ENCODE measurements at regions of chr7 and their contacts with region 1.

Region 1: GRCh38 chr7:100101016-100101862 is at the starts of genes AP4M1 and MCM7:
- DNase-seq: peak; percentile 99
- ATAC-seq: peak; percentile 87
- H3K4me3 Mint-ChIP-seq: peak within 1 kb of the TSS; percentile 91
- H3K27ac Mint-ChIP-seq: peak within 1 kb of the TSS; percentile 99
- H3K4me1 Mint-ChIP-seq: peaks cover 24% of the 10 kb centered on the region
- H3K27me3 Mint-ChIP-seq: no peaks in the 10 kb centered on the region
- CTCF ChIP-seq: no peak
- total RNA-seq, gene AP4M1: 16.9 to 18.0 TPM (median 17.4 TPM) in 3 replicates
- total RNA-seq, gene MCM7: 306 to 351 TPM (median 315 TPM) in 3 replicates

Region 2: GRCh38 chr7:100081535-100082102 is 19.6 kb before region 1 on chr7 and contains the start of gene ZNF3:
- CTCF ChIA-PET with region 1: interaction called, 23 read pairs
- POLR2A ChIA-PET with region 1: interaction called, 56 read pairs
- DNase-seq: peak; percentile 98
- ATAC-seq: peak; percentile 86
- H3K4me3 Mint-ChIP-seq: peak within 1 kb of the TSS; percentile 98
- H3K27ac Mint-ChIP-seq: peak within 1 kb of the TSS; percentile 95
- H3K4me1 Mint-ChIP-seq: peaks cover 23% of the 10 kb centered on the region
- H3K27me3 Mint-ChIP-seq: no peaks in the 10 kb centered on the region; the same call in 1 of the 2 replicates
- CTCF ChIP-seq: peak; percentile 86
- total RNA-seq, gene ZNF3: 38.1 to 48.3 TPM (median 39.1 TPM) in 3 replicates

Region 3: GRCh38 chr7:100088621-100089457 is 12.4 kb before region 1 on chr7 and contains the start of gene COPS6:
- CTCF ChIA-PET with region 1: interaction called, 7 read pairs
- POLR2A ChIA-PET with region 1: interaction called, 56 read pairs
- DNase-seq: peak; percentile 79
- ATAC-seq: peak; percentile 4
- H3K4me3 Mint-ChIP-seq: peak within 1 kb of the TSS; percentile 93
- H3K27ac Mint-ChIP-seq: peak within 1 kb of the TSS; percentile 92
- H3K4me1 Mint-ChIP-seq: peaks cover 11% of the 10 kb centered on the region
- H3K27me3 Mint-ChIP-seq: no peaks in the 10 kb centered on the region; the same call in 1 of the 2 replicates
- CTCF ChIP-seq: no peak
- total RNA-seq, gene COPS6: 118 to 124 TPM (median 119 TPM) in 3 replicates

Region 4: GRCh38 chr7:100111914-100112313 is 10.7 kb after region 1 on chr7:
- CTCF ChIA-PET with region 1: interaction called, 17 read pairs
- POLR2A ChIA-PET with region 1: interaction called, 17 read pairs
- DNase-seq: no peak
- ATAC-seq: no peak
- H3K4me3 Mint-ChIP-seq: no peak overlapping the region
- H3K27ac Mint-ChIP-seq: no peak overlapping the region
- H3K4me1 Mint-ChIP-seq: no peaks in the 10 kb centered on the region
- H3K27me3 Mint-ChIP-seq: no peaks in the 10 kb centered on the region
- CTCF ChIP-seq: no peak

Region 5: DNA sequence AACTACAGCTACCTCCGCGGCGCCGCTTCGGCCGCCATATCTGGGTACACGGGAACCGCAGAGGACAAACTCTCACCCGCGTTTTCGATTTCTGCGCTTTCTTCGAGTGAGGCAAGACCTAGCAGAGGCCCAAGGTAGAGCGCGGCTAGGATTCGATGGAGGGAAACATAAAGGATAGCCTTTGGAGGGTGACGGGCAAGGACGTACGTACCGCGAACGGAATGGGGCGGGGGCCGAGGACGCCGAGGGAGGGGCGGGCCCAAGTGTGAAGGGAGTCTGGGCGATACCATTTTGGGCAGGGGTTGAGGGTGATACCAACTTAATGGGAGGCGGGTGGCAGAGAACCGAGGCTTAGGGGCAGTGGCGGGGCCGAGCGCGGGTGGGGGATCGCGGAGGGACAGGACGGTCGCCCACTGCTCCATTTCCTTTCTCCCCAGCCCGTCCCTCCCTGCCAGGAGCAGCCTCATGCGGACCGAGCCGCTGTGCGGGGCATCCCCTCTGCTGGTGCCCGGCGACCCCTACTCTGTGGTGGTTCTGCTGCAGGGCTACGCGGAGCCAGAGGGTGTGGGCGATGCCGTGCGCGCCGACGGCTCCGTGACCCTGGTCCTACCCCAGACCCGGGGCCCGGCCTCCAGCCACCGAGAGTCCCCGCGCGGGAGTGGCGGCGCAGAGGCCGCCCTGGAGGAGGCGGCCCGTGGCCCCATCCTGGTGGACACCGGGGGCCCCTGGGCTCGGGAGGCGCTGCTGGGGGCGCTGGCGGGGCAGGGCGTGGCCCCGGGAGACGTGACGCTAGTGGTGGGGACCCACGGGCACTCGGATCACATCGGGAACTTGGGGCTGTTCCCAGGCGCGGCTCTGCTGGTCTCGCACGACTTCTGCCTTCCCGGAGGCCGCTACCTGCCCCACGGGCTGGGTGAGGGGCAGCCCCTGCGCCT is 26.0 kb after region 1 on chr7 and contains the start of gene MBLAC1:
- CTCF ChIA-PET with region 1: interaction called, 41 read pairs
- POLR2A ChIA-PET with region 1: interaction called, 21 read pairs
- DNase-seq: peak; percentile 86
- ATAC-seq: peak; percentile 62
- H3K4me3 Mint-ChIP-seq: peak within 1 kb of the TSS; percentile 99
- H3K27ac Mint-ChIP-seq: peak within 1 kb of the TSS; percentile 99
- H3K4me1 Mint-ChIP-seq: peaks cover 15% of the 10 kb centered on the region
- H3K27me3 Mint-ChIP-seq: peaks cover 15% of the 10 kb centered on the region
- CTCF ChIP-seq: no peak
- total RNA-seq, gene MBLAC1: 3.0 to 3.5 TPM (median 3.0 TPM) in 3 replicates

Region 6: DNA sequence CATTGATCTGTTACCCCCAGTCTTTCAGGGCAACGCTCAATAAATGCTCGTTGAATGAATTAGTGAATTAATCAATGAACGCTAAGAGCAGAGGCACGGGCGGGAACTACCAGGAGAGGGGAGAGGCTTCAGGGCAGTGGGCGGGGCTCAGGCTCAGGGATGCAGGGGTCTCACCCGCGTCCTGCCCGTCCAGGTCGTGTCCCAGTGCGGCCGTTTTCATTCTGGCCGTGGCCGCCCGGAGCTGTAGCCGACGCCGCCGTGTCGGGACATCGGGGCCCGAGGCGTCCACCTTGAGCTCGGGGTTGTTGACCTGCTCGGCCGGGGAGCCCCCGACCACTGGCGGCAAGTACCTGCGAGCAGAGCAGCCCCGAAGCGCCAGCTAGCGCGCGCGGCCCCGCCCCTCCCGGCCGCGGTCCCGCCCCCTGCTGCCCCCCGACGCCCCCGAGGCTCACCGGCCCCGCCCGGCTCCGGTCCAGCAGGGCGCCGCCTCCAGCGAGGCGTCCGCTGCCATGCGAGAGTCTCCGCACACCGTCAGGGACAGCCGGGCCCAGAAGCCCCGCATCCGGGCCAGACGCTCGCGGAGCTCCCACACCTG is 69.9 kb after region 1 on chr7:
- CTCF ChIA-PET with region 1: interaction called, 3 read pairs
- POLR2A ChIA-PET with region 1: interaction called, 10 read pairs
- DNase-seq: peak; percentile 80
- ATAC-seq: peak; percentile 50
- H3K4me3 Mint-ChIP-seq: peak overlapping the region; percentile 61
- H3K27ac Mint-ChIP-seq: no peak overlapping the region
- H3K4me1 Mint-ChIP-seq: peaks cover 61% of the 10 kb centered on the region
- H3K27me3 Mint-ChIP-seq: peaks cover 27% of the 10 kb centered on the region
- CTCF ChIP-seq: no peak